Psoas muscle (tissue), 8 donors: ENCODE measurements at regions of chr1 and their contacts with region 1.

Region 1: GRCh38 chr1:232319072-232319471 is 310.9 kb downstream of the SIPA1L2 start:
- DNase-seq: peak; percentile 80 to 82
- ATAC-seq: peak; percentile 96 to 98 (median 98)
- H3K4me3 ChIP-seq: no peak overlapping the region
- H3K27ac ChIP-seq: peak overlapping the region; percentile 81
- H3K4me1 ChIP-seq: peaks cover 12% of the 10 kb centered on the region
- H3K27me3 ChIP-seq: no peaks in the 10 kb centered on the region
- CTCF ChIP-seq: no peak

Region 2: GRCh38 chr1:232287676-232288569 is 31.1 kb before region 1 on chr1:
- intact Hi-C with region 1: no loop called
- DNase-seq: peak; percentile 46 to 76
- ATAC-seq: peak in 3 of 4 donors; percentile 53 to 81 (median 54)
- H3K4me3 ChIP-seq: no peak overlapping the region
- H3K27ac ChIP-seq: no peak overlapping the region
- H3K4me1 ChIP-seq: peaks cover 3% of the 10 kb centered on the region
- H3K27me3 ChIP-seq: no peaks in the 10 kb centered on the region
- CTCF ChIP-seq: no peak

Region 3: DNA sequence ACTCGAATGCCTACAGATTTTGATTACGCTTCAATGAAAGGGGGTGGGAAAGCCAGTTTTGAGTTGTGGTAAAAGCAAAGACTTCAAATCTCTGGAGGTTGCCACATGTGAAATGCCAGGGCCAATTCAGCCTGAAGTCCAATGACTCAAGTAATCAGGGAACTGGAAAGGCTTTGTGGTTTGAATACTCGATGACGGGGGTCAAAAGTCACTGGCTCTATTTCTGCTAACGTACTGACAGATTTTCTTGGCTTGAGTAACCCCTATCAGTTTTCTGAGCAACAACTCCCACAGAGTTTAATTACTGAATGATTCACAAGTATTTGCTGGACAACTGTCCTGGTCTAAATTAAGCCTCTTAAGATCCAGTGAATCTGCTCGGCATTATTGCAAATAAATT is 158.7 kb after region 1 on chr1:
- intact Hi-C with region 1: loop called in 1 of 2 experiments (anchors 5 kb)
- DNase-seq: peak; percentile 15 to 39
- ATAC-seq: peak; percentile 85 to 97 (median 96)
- H3K4me3 ChIP-seq: no peak overlapping the region
- H3K27ac ChIP-seq: peak overlapping the region; percentile 81
- H3K4me1 ChIP-seq: peaks cover 41% of the 10 kb centered on the region
- H3K27me3 ChIP-seq: no peaks in the 10 kb centered on the region
- CTCF ChIP-seq: no peak

Region 4: DNA sequence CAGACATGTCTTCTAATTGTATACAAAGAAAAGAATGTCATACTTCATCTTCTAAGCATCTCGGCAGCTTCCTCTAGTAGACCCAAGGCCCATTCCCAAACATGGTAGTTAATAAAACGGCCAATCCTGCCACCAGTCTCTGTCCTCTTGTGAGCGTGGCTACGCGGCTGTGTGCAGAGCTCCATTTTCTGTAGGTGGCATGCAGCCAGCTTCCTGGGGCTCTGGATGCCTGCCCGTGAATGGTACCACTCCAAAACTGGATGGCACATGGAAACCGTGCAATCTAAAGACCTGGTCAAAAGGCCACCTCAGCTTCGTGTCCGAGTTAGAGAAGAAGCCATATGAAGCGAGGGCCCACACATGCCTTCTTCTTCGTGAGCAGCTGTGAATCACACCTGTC is 200.1 kb after region 1 on chr1:
- intact Hi-C with region 1: no loop called
- DNase-seq: no peak
- ATAC-seq: peak in 1 of 4 donors; percentile 29
- H3K4me3 ChIP-seq: no peak overlapping the region
- H3K27ac ChIP-seq: no peak overlapping the region
- H3K4me1 ChIP-seq: no peaks in the 10 kb centered on the region
- H3K27me3 ChIP-seq: no peaks in the 10 kb centered on the region
- CTCF ChIP-seq: no peak

Region 5: DNA sequence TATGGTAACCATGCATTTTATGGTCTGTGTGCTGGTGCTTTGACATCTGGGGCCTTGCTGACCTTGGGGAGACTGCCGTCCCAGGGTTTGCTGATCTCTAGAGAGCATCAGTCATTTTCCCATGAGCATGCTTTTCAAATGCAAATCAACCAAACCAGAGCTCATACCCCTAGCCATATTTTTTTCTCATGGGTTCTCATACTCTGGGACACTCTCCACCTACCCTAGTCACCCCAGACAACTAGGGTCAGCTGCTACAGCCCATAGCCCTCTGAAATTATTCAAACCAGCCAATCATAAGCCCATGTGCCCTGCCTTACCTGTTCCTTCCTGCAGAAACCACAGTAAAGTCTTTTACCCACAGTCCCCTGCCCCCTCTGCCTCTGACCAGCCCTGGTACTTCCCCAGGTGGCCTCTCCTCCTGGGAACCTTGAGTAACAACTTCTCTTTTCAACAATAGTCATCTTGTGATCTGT is 1140.4 kb after region 1 on chr1:
- intact Hi-C with region 1: no loop called
- DNase-seq: no peak
- ATAC-seq: no peak
- H3K4me3 ChIP-seq: no peak overlapping the region
- H3K27ac ChIP-seq: no peak overlapping the region
- H3K4me1 ChIP-seq: no peaks in the 10 kb centered on the region
- H3K27me3 ChIP-seq: no peaks in the 10 kb centered on the region
- CTCF ChIP-seq: no peak